CD8-positive, alpha-beta T cell (primary cell): ENCODE measurements at regions of chr13 and their contacts with region 1.

Region 1: GRCh38 chr13:102620516-102620915 is 23.7 kb downstream of the TPP2 start:
- DNase-seq: no peak
- ATAC-seq: no peak
- H3K4me3 ChIP-seq: no peak overlapping the region
- H3K4me3 Mint-ChIP-seq: no peak overlapping the region
- H3K27ac ChIP-seq: no peak overlapping the region
- H3K27ac Mint-ChIP-seq: peak overlapping the region; percentile 12
- H3K4me1 ChIP-seq: no peaks in the 10 kb centered on the region
- H3K4me1 Mint-ChIP-seq: peaks cover 18% of the 10 kb centered on the region
- H3K27me3 ChIP-seq: no peaks in the 10 kb centered on the region
- H3K27me3 Mint-ChIP-seq: no peaks in the 10 kb centered on the region
- CTCF ChIP-seq: no peak

Region 2: DNA sequence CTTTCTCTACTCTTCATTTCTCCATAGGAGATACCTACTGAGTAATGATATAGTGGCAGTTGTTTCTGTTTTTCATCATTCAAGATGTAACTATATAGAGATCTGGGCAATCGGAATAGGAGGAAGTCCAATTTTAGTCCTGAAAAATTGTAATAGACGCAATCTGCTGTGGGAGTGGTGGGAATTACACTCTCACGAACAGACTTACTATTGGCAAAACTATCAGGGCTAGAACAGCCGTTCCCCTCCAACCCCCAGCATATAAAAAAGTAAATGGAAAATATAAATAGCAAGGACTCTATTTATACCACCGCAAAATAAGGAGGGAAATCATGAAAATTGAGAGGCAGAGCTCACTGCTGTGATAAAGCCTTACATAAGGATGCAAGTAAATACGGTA is 548.8 kb before region 1 on chr13:
- CTCF ChIA-PET with region 1: no interaction called
- POLR2A ChIA-PET with region 1: no interaction called
- intact Hi-C with region 1: no loop called
- DNase-seq: no peak
- ATAC-seq: no peak
- H3K4me3 ChIP-seq: no peak overlapping the region
- H3K4me3 Mint-ChIP-seq: no peak overlapping the region
- H3K27ac ChIP-seq: no peak overlapping the region
- H3K27ac Mint-ChIP-seq: no peak overlapping the region
- H3K4me1 ChIP-seq: no peaks in the 10 kb centered on the region
- H3K4me1 Mint-ChIP-seq: no peaks in the 10 kb centered on the region
- H3K27me3 ChIP-seq: no peaks in the 10 kb centered on the region
- H3K27me3 Mint-ChIP-seq: peaks cover 3% of the 10 kb centered on the region
- CTCF ChIP-seq: no peak

Region 3: GRCh38 chr13:102642475-102642874 is 22.0 kb after region 1 on chr13:
- CTCF ChIA-PET with region 1: no interaction called
- POLR2A ChIA-PET with region 1: no interaction called
- intact Hi-C with region 1: loop called in 1 of 2 experiments (anchors 2 kb)
- DNase-seq: no peak
- ATAC-seq: no peak
- H3K4me3 ChIP-seq: no peak overlapping the region
- H3K4me3 Mint-ChIP-seq: no peak overlapping the region
- H3K27ac ChIP-seq: no peak overlapping the region
- H3K27ac Mint-ChIP-seq: peak overlapping the region; percentile 20
- H3K4me1 ChIP-seq: no peaks in the 10 kb centered on the region
- H3K4me1 Mint-ChIP-seq: peaks cover 5% of the 10 kb centered on the region
- H3K27me3 ChIP-seq: no peaks in the 10 kb centered on the region
- H3K27me3 Mint-ChIP-seq: no peaks in the 10 kb centered on the region
- CTCF ChIP-seq: no peak